IMR-90 (cell line): ENCODE measurements at regions of chr15 and their contacts with region 1.

Region 1: DNA sequence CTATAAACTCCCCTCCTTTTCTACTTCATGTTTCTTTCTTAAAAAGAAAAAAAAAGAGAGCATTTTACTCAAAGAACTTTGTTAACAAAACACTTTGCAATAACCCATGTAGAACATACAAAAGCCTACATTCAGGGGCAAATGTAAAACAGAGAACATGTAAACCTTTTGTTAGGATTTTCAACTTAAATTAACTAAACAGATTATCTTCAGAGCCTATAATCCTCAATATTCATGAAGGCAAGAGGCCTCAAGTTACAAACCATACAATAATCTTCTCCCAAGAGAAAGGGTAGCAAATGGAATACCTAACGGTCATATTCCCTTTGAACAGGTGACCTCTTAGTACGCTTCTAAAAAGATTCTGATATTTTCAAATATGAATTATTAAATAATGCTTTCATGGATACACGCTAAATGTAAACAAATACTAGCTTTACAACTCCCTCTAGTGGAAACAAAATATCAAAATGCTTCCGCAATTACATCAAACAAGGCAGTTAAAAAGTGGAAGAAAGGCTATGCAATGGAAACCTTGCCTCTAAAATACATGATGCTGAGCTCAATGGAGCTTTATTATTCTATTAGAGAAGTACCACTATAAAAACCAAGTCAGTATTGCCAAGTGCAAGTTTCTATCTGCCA is 9.9 kb downstream of the CEP152 start:
- DNase-seq: peak; percentile 43
- ATAC-seq: no peak
- H3K4me3 ChIP-seq: no peak overlapping the region
- H3K27ac ChIP-seq: no peak overlapping the region
- H3K4me1 ChIP-seq: peaks cover 5% of the 10 kb centered on the region
- H3K27me3 ChIP-seq: no peaks in the 10 kb centered on the region
- CTCF ChIP-seq: peak; percentile 51
- POLR2A ChIP-seq: no peak
- RAD21 ChIP-seq: peak; percentile 48; the same call in 1 of the 2 replicates

Region 2: DNA sequence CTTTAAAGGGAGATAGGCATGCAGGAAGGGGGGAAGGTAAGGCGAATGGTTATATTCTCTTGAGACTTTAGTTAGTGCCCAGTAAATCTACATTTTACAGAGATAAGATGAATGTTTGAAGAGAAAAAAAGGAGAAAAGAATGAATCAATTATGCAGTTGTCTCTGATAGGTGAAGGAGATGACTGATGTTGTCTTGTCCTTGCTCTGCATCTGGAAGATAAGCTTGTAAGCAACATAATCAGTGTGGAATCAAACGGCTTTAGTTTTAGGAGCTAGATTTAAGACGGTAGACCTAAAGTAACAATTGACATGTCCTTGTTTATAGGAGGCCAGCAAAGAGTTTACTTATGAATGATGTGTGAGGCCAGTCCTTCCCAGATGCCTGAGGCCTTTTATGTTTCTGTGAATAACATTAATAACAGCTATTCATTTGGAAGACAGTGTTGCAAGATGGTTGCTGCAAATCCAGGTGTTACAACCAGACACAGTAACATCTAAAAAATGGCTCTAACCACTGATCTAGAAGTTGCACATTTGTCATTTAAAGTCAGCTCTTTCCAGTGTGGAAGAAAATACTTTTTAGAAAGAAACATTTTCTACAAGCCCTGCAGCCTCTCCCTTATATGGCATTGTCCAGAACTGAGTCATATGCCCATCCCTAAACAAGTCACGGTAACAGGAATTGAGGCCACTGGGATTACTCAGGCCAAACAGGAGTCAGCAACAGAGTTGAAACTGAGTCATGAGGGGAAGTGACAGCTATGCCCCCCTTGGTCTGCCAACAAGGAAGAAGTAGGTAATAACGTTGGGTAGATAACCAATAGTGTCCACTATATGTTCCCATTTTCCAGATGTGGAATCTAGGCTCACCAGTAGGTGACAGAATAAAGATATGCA is 77.9 kb before region 1 on chr15:
- CTCF ChIA-PET with region 1: no interaction called
- POLR2A ChIA-PET with region 1: no interaction called
- dilution Hi-C with region 1: no loop called
- in situ Hi-C with region 1: no loop called
- intact Hi-C with region 1: loop called (anchors 5 kb)
- DNase-seq: peak; percentile 94
- ATAC-seq: peak; percentile 91
- H3K4me3 ChIP-seq: no peak overlapping the region
- H3K27ac ChIP-seq: peak overlapping the region; percentile 16
- H3K4me1 ChIP-seq: peaks cover 17% of the 10 kb centered on the region
- H3K27me3 ChIP-seq: no peaks in the 10 kb centered on the region
- CTCF ChIP-seq: no peak
- POLR2A ChIP-seq: no peak
- RAD21 ChIP-seq: no peak